Left lung (tissue), 14 donors: ENCODE measurements at regions of chr2 and their contacts with region 1.

Region 1: GRCh38 chr2:20661067-20661980 is 5.6 kb upstream of the GDF7 start:
- DNase-seq: peak; percentile 61 to 82 (median 66)
- ATAC-seq: peak; percentile 95
- H3K4me3 ChIP-seq: no peak overlapping the region
- H3K27ac ChIP-seq: no peak overlapping the region
- H3K4me1 ChIP-seq: peaks cover 6 to 12% of the 10 kb centered on the region in 2 donors
- H3K27me3 ChIP-seq: peaks cover 43 to 77% of the 10 kb centered on the region in 2 donors
- CTCF ChIP-seq: peak; percentile 93 to 94

Region 2: GRCh38 chr2:20962939-20963557 is 301.7 kb after region 1 on chr2:
- intact Hi-C with region 1: loop called in 1 of 2 experiments (anchors 2 kb)
- DNase-seq: peak in 3 of 4 donors; percentile 46 to 69 (median 60)
- ATAC-seq: peak; percentile 95
- H3K4me3 ChIP-seq: no peak overlapping the region
- H3K27ac ChIP-seq: no peak overlapping the region
- H3K4me1 ChIP-seq: no peaks in the 10 kb centered on the region
- H3K27me3 ChIP-seq: peaks cover 3 to 55% of the 10 kb centered on the region in 2 donors
- CTCF ChIP-seq: peak; percentile 86 to 88

Region 3: GRCh38 chr2:21123473-21124393 is 462.4 kb after region 1 on chr2 and contains the start of gene TDRD15:
- intact Hi-C with region 1: loop called in 1 of 2 experiments (anchors 10 kb)
- DNase-seq: peak in 1 of 4 donors; percentile 64
- ATAC-seq: no peak
- H3K4me3 ChIP-seq: no peak within 1 kb of the TSS
- H3K27ac ChIP-seq: no peak within 1 kb of the TSS
- H3K4me1 ChIP-seq: no peaks in the 10 kb centered on the region
- H3K27me3 ChIP-seq: no peaks in the 10 kb centered on the region
- CTCF ChIP-seq: no peak
- polyA plus RNA-seq, gene TDRD15: not detected